Dorsolateral prefrontal cortex (tissue), 120 donors: ENCODE measurements at regions of chr20 and their contacts with region 1.

Region 1: GRCh38 chr20:38893565-38894090 is 32.6 kb upstream of the FAM83D start:
- DNase-seq: peak; percentile 76 to 89 (median 82)
- H3K4me3 ChIP-seq: peak overlapping the region in 29 of 59 donors; percentile 3 to 39 (median 23)
- H3K27ac ChIP-seq: peak overlapping the region; percentile 58 to 100 (median 99)
- H3K27me3 ChIP-seq: no peaks in the 10 kb centered on the region
- CTCF ChIP-seq: peak; percentile 45 to 97 (median 93)

Region 2: DNA sequence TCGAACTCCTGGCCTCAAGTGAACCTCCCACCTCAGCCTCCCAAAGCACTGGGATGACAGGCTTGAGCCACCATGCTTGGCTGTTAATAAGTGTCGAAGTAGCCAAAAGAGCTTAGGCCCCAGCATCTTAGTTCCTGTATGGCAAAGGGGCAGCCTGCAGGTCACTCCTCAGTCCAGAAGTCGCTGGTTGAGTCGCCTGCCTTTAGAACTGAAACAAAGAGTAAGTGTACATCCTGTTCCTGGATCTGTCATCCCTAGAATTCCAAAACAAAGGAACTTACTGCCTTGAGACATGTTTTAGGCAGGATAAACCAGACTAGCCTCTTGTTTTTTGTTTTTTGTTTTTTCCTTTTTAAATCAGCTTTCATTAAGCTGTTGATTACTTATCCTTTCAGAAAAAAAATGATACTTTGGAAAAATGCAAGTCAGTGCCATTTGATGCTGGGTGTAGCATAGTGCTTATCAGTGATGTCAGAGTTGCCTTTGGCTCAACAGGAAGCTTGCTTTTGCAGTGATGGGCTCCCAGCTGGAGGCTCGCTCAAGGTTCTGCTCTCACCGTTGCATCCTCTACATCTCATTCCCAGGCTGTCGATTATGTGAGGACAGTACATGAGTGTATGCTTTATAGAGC is 136.4 kb before region 1 on chr20:
- intact Hi-C with region 1: loop called in 1 of 2 experiments (anchors 5 kb)
- DNase-seq: no peak
- H3K4me3 ChIP-seq: no peak overlapping the region
- H3K27ac ChIP-seq: peak overlapping the region in 8 of 59 donors; percentile 4 to 67 (median 18)
- H3K27me3 ChIP-seq: no peaks in the 10 kb centered on the region
- CTCF ChIP-seq: no peak

Region 3: DNA sequence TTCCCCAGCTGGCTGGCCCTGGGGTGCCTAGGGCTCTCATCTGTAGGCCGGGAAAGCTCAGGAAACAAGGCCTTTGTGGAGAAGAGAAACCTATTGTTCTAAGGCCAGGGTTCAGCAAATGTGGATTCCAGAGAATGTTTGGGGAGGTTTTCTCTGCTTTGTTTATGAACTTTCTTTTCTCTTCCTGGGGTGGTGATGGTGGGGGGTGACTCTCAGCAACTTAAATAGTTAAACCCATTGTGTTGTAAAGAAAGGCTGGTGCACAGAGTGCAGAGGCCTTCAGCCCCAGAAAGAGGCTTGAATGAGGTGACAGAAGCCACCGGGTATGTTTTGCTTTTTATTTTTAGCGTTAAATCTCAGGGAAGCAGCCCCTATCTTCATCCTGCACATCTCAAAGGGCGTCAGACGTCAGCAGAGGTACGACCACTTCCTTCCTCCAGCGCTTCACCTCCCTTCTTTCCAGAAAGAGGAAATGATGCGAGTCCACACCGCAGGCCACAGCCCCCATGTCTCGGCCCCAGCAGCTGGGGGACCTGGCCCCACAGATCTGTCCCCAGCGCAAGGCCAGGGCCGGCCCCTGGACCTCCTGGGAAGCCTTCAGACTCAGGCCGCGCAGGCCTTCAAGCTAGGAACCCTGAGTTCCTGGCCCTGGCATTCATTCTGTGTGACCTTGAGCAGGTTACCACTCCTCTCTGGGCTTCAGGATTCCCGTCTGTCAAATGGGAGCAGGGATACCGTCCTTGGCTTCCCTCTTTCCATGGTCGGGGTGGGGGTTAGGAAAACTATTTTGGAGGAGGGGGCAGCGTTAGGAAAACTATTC is 88.7 kb before region 1 on chr20:
- intact Hi-C with region 1: loop called (anchors 2 kb)
- DNase-seq: no peak
- H3K4me3 ChIP-seq: peak overlapping the region; percentile 54 to 97 (median 84)
- H3K27ac ChIP-seq: peak overlapping the region; percentile 69 to 98 (median 95)
- H3K27me3 ChIP-seq: peaks cover 0 to 7% (median 0%) of the 10 kb centered on the region in 45 donors
- CTCF ChIP-seq: no peak